ENCODE measurements at regions of chr19 and their contacts with region 1.

Region 1: DNA sequence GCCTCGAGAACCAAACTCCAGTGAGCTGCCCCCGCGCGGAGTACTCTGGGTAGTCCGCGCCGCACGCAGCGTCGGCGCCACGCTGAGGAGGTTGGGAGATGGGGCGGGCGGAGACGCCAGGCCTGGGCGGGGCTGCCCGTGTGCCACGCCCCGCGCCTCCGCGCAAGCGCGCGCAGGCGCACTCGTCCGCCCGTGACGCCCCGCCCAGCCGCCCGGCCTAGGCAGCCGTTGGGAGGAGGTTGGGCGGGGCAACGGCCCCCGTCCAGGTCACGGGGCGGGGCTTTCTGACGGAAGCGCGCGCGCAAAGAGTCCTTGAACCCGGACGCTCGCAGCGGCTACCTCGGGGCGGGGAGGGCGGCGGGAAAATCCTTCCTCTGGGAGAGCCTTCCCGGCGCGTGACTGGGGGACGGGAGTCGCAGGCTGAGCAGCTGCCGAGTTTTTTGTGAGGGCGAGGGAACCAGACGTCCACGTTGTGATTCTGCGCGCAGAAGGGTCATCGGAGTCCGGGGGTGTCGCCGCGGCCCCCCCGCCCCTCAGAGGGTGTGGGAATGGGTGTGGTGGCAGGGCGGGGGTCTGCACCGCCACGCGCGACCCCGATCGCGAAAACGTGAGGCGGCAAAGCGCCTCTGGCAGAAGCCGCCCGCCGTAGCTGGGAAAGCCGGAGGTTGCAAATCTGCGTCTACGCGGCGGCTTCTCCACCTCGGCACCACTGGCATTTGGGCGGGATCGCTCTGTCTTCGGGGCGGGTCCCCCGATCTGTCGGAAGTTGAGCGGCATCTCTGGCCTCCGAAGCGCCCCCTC is at the start of gene MED26:
- DNase-seq: peak; percentile 92 to 94
- H3K4me3 ChIP-seq: peak within 1 kb of the TSS; percentile 98 to 99 (median 99)
- H3K27ac ChIP-seq: peak within 1 kb of the TSS; percentile 95 to 96
- H3K4me1 ChIP-seq: peaks cover 0 to 21% of the 10 kb centered on the region in 2 donors
- H3K27me3 ChIP-seq: no peaks in the 10 kb centered on the region
- CTCF ChIP-seq: no peak
- POLR2A ChIP-seq: peak; percentile 18
- total RNA-seq, gene MED26: 5.6 to 10.0 (median 7.5) TPM

Region 2: GRCh38 chr19:16536130-16536529 is 92.3 kb before region 1 on chr19:
- intact Hi-C with region 1: loop called (anchors 5 kb)
- DNase-seq: no peak
- H3K4me3 ChIP-seq: no peak overlapping the region
- H3K27ac ChIP-seq: no peak overlapping the region
- H3K4me1 ChIP-seq: peaks cover 3 to 5% of the 10 kb centered on the region in 2 donors
- H3K27me3 ChIP-seq: no peaks in the 10 kb centered on the region
- CTCF ChIP-seq: no peak
- POLR2A ChIP-seq: no peak

Region 3: DNA sequence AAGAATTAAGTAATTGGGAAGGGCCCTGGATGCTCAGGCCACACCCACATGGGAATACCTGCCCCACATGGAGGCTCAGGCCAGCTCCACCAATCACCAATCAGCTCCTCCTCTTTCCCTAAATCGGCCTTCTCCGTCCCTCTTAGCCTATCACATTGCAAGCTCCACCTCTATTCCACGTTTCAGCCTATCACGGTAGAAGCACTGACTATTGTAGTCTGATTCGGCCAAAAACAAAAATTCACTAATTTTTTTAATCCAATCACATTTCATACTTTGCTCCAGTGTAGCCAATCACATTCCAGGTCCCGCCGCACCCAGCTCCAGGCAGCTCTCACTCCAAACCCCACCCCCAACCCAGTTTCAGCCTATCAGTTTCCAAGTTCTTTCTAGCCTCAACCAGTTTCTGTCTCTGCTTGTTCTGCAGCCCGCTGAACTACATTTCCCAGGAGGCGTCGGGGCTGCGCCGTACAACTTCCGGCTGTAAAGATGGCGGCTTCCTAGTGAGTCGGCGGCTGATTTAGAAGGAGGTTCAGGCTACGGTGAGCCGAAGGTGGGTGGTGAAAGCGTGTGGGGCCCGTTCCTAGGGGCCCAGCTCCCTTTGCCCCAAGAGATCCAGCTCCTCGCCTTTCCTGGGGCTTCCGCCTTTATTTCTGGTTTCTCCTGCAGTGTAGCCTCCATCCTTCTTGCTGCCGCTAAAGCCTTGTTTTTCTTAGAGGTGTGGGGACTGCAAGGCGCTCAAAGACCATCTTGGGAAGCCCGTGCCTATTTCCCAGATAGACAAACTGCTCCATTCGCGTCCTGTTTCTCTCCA is 638.8 kb after region 1 on chr19 and contains the start of gene BABAM1:
- intact Hi-C with region 1: loop called (anchors 5 kb)
- DNase-seq: peak; percentile 89 to 99
- H3K4me3 ChIP-seq: peak within 1 kb of the TSS; percentile 75 to 94 (median 92)
- H3K27ac ChIP-seq: peak within 1 kb of the TSS in 1 of 2 donors; percentile 78
- H3K4me1 ChIP-seq: peaks cover 0 to 5% of the 10 kb centered on the region in 2 donors
- H3K27me3 ChIP-seq: no peaks in the 10 kb centered on the region
- CTCF ChIP-seq: peak in 2 of 3 donors; percentile 8 to 20
- POLR2A ChIP-seq: peak; percentile 22
- total RNA-seq, gene BABAM1: 48.5 to 65.6 (median 54.1) TPM

Region 4: GRCh38 chr19:17549085-17549740 is 920.8 kb after region 1 on chr19:
- intact Hi-C with region 1: loop called (anchors 5 kb)
- DNase-seq: no peak
- H3K4me3 ChIP-seq: no peak overlapping the region
- H3K27ac ChIP-seq: no peak overlapping the region
- H3K4me1 ChIP-seq: no peaks in the 10 kb centered on the region
- H3K27me3 ChIP-seq: no peaks in the 10 kb centered on the region
- CTCF ChIP-seq: no peak
- POLR2A ChIP-seq: no peak

Region 5: DNA sequence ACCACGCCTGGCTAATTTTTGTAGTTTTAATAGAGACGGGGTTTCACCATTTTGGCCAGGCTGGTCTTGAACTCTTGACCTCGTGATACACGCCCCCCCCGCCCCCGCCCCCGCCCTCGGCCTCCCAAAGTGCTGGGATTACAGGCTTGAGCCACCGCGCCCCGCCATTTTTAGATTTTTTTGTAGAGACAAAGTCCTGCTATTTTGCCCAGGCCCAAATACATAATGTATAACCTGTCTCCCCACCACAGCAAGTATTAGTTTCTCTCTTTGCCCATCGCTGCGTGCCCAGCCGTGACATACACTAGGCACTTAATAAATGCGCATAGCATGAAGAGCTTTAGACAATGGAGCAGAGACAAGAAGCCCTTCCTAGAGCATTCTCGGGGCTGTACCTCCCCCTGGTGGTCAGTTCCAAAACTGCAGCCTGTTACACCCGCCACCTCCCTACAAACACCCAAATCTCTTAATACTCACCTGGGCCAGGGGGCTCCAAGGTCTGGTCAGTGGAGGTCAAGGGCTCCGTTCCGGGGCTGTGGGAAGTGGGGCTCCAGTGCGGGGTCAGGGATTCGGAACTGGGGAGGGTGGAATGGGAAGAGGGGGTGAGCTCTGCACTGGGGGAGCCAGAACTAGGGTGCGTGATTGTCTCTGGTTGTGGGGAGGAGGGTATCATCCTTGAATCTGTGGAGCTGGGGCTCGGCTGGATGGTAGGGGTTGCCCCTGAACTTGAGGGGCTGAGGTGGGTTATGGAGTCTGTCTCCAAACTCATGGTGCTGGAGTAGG is 1623.4 kb after region 1 on chr19:
- intact Hi-C with region 1: loop called (anchors 5 kb)
- DNase-seq: peak; percentile 61 to 79
- H3K4me3 ChIP-seq: no peak overlapping the region
- H3K27ac ChIP-seq: no peak overlapping the region
- H3K4me1 ChIP-seq: no peaks in the 10 kb centered on the region
- H3K27me3 ChIP-seq: no peaks in the 10 kb centered on the region
- CTCF ChIP-seq: peak; percentile 97
- POLR2A ChIP-seq: no peak